HepG2 (cell line): ENCODE measurements at regions of chr12 and their contacts with region 1.

Region 1: DNA sequence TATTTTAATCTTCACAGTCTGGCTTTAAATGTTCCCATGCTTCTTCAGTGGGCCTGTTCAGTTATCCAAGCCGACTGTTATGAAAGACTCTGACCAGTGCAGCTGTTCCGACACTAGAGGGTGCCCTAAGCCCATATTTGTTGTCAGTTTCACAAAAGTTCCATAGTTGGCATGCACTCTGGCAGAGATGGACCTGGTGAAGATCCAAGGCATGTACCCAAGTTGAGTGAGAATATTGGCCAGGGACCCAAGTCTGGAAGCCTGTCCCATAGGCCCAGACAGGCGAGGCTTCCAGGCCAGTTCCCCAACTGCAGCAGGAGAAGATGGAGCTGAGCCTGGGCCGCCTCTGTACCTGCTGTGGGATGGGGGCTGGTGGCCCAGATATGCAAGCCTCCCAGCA is 27.4 kb upstream of the GUCY2C start:
- DNase-seq: peak; percentile 54
- ATAC-seq: peak; percentile 96
- H3K4me3 ChIP-seq: no peak overlapping the region
- H3K27ac ChIP-seq: no peak overlapping the region
- H3K4me1 ChIP-seq: no peaks in the 10 kb centered on the region
- H3K27me3 ChIP-seq: no peaks in the 10 kb centered on the region
- CTCF ChIP-seq: peak; percentile 92
- EP300 ChIP-seq: no peak
- POLR2A ChIP-seq: no peak
- RAD21 ChIP-seq: peak; percentile 79

Region 2: GRCh38 chr12:14810953-14811483 is 87.3 kb after region 1 on chr12:
- CTCF ChIA-PET with region 1: no interaction called
- POLR2A ChIA-PET with region 1: no interaction called
- in situ Hi-C with region 1: no loop called
- intact Hi-C with region 1: loop called (anchors 5 kb)
- DNase-seq: peak; percentile 44
- ATAC-seq: peak; percentile 90
- H3K4me3 ChIP-seq: no peak overlapping the region
- H3K27ac ChIP-seq: no peak overlapping the region
- H3K4me1 ChIP-seq: peaks cover 10% of the 10 kb centered on the region
- H3K27me3 ChIP-seq: no peaks in the 10 kb centered on the region
- CTCF ChIP-seq: peak; percentile 76
- EP300 ChIP-seq: no peak
- POLR2A ChIP-seq: no peak
- RAD21 ChIP-seq: peak; percentile 71

Region 3: DNA sequence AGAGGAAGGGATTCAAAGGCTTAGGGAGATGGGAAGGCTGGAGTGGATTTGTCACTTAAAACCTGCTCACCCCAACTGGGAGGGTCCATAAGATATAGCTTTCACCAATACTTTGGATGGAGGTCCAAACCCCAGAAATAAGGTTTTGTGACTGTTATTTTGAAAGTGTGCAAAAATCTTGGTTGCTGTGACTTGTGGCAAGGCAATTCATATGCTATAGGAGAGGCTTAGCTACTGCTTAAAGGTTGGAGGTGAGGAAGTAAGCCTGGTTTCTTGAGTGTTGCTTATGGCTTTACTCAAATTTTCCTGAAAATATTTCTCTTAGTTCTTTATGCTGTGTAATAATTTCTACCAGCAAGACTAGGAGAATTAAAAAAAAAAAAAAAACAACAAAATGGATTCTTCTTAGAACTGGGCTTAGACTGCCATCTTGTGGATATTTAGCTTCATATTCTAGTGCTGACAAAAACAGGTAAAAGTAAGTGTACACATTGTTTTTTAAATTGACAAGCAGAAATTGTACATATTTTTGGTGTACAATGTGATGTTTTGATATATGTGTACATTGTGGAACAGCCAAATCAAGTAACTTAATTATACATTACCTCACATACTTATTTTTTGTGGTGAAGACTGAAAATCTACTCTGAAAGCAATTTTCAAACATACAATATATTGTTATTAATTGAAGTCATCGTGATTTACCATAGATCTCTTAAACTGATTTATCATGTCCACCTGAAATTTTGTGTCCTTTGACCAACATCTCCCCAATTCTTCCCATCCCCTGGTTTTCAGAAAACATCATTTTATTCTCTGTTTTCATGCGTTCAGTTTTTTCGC is 272.0 kb after region 1 on chr12:
- CTCF ChIA-PET with region 1: interaction called, 17 read pairs
- POLR2A ChIA-PET with region 1: no interaction called
- in situ Hi-C with region 1: loop called (anchors 5 kb)
- intact Hi-C with region 1: loop called (anchors 1 kb)
- DNase-seq: peak; percentile 52
- ATAC-seq: no peak
- H3K4me3 ChIP-seq: no peak overlapping the region
- H3K27ac ChIP-seq: no peak overlapping the region
- H3K4me1 ChIP-seq: no peaks in the 10 kb centered on the region
- H3K27me3 ChIP-seq: peaks cover 0 to 2% of the 10 kb centered on the region in 2 experiments; a peak in 1 of 5 replicates
- CTCF ChIP-seq: peak; percentile 63
- EP300 ChIP-seq: no peak
- POLR2A ChIP-seq: no peak
- RAD21 ChIP-seq: no peak

Region 4: DNA sequence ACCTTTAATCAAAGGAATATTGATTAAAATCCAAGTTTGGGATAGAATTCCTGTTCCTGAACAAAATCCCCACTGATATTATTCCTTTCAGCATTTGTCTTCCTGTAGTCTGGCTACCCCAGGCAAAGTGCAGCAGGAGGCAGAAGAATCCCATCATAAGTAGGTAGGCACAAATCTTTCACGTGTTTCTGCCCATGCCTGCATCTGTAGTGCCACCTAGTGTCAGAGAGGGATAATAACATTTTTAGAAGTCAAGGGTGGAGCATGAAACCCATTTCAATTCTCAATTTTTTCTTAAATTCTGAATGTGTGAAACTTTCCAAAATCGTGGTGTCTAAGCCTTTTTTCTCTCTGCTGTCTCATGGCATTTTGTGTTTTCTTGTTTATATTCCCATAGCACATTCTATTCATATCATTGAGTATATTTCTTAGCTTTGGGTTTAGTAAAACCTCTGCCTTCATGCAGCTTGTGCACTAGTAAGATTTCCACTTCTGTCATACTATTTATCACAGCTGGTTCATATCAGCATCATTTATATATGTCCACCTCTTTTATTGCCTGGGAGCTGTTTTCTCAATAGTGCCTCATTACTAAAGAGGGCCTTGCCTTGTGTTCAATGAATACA is 545.3 kb after region 1 on chr12:
- CTCF ChIA-PET with region 1: interaction called, 8 read pairs
- POLR2A ChIA-PET with region 1: no interaction called
- in situ Hi-C with region 1: no loop called
- intact Hi-C with region 1: loop called (anchors 1 kb)
- DNase-seq: peak; percentile 64
- ATAC-seq: peak; percentile 76
- H3K4me3 ChIP-seq: no peak overlapping the region
- H3K27ac ChIP-seq: no peak overlapping the region
- H3K4me1 ChIP-seq: no peaks in the 10 kb centered on the region
- H3K27me3 ChIP-seq: no peaks in the 10 kb centered on the region; a peak in 1 of 5 replicates
- CTCF ChIP-seq: peak; percentile 82
- EP300 ChIP-seq: no peak
- POLR2A ChIP-seq: no peak
- RAD21 ChIP-seq: peak; percentile 42; the same call in 1 of the 2 replicates